ENCODE measurements at regions of chr7 and their contacts with region 1.

Region 1: DNA sequence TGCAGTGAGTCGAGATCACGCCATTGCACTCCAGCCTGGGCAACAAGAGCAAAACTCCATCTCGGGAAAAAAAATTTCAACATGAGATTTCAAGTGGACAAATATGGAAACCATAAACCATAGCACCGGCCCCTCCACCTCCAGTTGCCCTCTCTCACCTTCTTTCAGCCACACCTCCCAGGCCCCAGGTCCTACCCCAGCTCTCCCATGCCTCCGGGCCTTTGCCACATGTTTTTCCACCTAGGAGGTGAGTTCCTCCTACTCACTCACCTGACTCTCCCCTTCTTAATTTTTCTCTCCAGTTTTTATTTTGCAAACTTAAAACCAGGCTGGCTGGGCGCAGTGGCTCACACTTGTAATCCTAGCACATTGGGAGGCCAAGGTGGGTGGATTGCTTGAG is 13.7 kb upstream of the CLDN4 start:
- DNase-seq: no peak
- CTCF ChIP-seq: no peak

Region 2: DNA sequence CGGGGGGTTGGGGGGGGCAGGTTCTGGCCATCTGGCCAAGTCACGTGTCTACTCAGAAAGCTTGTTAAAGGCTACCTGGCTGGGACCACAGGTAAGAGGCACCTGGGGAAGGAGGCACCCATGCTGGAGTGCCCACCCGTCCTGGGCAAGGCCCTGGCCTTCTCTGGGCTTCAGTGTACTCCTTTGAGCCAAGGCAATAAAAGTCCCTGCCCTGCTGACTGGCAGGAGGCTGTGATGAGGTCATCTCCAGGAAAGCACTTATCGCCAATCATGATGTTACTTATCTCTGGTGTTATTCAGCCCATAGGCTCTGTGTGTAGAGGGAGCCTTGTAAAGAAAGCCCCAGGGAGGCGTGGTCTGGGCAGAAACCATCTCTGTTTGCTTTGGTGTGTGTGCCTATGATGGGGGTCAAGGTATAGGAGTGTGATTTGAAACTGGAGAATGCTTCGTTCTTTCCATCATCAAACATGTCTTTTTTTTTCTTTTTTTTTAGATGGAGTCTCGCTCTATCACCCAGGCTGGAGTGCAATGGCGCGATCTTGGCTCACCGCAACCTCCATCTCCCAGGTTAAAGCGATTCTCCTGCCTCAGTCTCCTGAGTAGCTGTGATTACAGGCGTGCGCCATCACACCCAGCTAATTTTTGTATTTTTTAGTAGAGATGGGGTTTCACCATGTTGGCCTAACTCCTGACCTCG is 11.1 kb after region 1 on chr7:
- CTCF ChIA-PET with region 1: interaction called, 12 read pairs
- POLR2A ChIA-PET with region 1: no interaction called
- DNase-seq: no peak
- CTCF ChIP-seq: no peak

Region 3: DNA sequence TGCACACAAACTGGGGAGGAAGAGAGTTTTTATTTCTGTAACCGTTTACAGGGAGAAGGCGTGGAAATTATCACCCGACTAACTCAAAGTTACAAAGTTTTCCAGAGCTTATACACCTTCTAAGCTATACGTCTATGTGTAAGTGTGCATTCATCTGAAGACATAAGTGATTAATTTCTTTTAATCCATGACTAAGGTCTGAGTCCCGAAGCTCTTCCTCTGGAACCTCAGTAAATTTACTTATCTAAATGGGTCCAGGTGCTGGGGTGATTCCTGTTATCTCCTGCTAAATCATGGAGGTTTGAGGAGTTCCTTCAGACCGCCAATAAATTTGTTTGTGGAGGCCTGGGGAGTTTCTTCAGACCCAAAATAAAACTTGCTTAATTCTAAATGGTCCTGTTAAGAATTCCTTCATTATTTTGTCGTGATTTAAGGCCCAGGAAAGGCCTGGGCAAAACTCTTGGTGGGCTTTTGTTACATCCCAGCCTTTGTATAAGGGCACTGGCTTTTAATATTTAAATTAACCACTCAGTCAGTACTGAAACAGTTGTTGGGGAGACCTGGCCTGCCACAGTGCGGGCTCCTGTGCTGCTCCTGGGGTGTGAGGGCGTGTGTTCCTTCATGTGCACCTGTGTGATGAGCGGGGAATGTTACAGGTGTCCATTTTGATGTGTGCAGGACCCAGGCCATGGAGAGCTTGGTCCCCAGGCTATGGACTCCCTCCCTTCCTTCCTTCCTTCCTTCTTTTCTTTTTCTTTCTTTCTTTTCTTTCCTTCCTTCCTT is 31.0 kb after region 1 on chr7:
- CTCF ChIA-PET with region 1: no interaction called
- POLR2A ChIA-PET with region 1: no interaction called
- DNase-seq: no peak
- CTCF ChIP-seq: no peak

Region 4: GRCh38 chr7:74043523-74043951 is 226.4 kb after region 1 on chr7:
- CTCF ChIA-PET with region 1: no interaction called
- POLR2A ChIA-PET with region 1: no interaction called
- DNase-seq: no peak
- CTCF ChIP-seq: no peak

Measured in GM10248 (cell line).